ENCODE measurements at regions of chr5 and their contacts with region 1.

Region 1: GRCh38 chr5:149576021-149576420 is 5.3 kb upstream of the ARHGEF37 start:
- DNase-seq: peak; percentile 48
- H3K4me3 Mint-ChIP-seq: no peak overlapping the region
- H3K27ac Mint-ChIP-seq: peak overlapping the region; percentile 83
- H3K4me1 Mint-ChIP-seq: peaks cover 26% of the 10 kb centered on the region
- H3K27me3 Mint-ChIP-seq: peaks cover 3% of the 10 kb centered on the region

Region 2: DNA sequence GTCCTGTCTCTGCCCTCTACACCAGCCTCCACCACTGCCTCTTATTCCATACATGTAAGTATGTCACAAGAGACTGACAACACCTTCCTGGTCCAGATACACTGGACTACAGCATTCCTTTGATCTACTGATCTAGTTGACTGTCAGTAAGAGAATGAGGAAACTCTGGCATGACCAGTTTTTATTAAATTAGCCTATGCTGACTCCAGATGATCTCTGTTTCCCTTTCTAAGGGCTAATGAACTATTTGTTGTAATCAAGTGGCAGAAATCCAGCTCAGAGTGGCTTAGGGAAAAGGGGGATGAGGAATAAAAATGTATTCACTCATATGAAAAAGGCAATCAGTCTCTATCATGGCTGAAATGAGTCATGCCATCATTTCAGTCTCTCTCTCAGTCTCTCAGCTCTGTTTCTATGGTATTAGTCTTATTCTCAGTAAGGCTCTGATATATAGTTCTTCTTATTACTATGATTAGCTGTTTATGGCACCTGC is 10.8 kb after region 1 on chr5:
- CTCF ChIA-PET with region 1: interaction called, 4 read pairs
- POLR2A ChIA-PET with region 1: interaction called, 4 read pairs
- intact Hi-C with region 1: loop called (anchors 1 kb)
- DNase-seq: no peak
- H3K4me3 Mint-ChIP-seq: no peak overlapping the region
- H3K27ac Mint-ChIP-seq: no peak overlapping the region
- H3K4me1 Mint-ChIP-seq: peaks cover 10% of the 10 kb centered on the region
- H3K27me3 Mint-ChIP-seq: peaks cover 1% of the 10 kb centered on the region

Region 3: GRCh38 chr5:149759986-149760853 is 184.2 kb after region 1 on chr5:
- CTCF ChIA-PET with region 1: no interaction called
- POLR2A ChIA-PET with region 1: no interaction called
- intact Hi-C with region 1: no loop called
- DNase-seq: no peak
- H3K4me3 Mint-ChIP-seq: no peak overlapping the region
- H3K27ac Mint-ChIP-seq: no peak overlapping the region
- H3K4me1 Mint-ChIP-seq: no peaks in the 10 kb centered on the region
- H3K27me3 Mint-ChIP-seq: no peaks in the 10 kb centered on the region